Heart right ventricle (tissue), 16 donors: ENCODE measurements at regions of chr16 and their contacts with region 1.

Region 1: DNA sequence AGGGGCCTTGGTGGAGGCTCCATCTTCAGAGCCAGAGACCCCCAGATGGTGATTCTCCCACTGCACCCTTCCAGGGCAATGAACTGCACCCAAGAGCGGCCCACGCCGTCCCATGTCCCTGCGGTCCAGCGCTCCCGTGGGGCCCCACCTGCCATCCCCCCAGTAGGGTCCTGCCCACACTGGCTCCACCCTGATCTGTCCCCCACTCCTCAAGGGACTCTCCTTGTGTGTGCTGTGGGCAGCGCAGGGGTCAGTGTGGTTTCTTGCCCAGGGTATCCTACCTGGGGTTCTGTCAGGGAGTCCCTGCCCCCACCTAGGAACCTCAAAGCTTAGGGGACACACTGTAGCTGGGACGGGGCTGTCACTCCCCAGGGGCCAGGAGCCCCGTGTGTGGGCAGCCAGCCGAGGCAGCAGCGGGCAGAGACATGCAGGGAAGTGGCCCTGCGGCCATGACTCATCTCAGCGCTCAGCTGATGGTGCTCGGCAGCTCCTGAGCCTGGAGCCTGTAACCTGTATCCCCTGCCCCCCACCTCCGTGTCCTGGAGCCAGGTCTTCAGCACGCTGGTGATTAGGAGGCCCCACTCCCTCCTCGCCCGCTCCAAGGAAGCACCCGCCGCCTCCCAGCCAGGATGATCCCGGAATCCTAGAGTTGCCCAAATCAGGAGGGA is 35.7 kb upstream of the SSTR5 start:
- DNase-seq: no peak
- ATAC-seq: no peak
- H3K4me3 ChIP-seq: no peak overlapping the region
- H3K27ac ChIP-seq: no peak overlapping the region
- H3K4me1 ChIP-seq: no peaks in the 10 kb centered on the region
- H3K27me3 ChIP-seq: peaks cover 5 to 51% (median 47%) of the 10 kb centered on the region in 7 donors
- CTCF ChIP-seq: no peak

Region 2: GRCh38 chr16:1073566-1074378 is 36.9 kb after region 1 on chr16:
- intact Hi-C with region 1: loop called in 1 of 10 experiments (anchors 1 kb)
- DNase-seq: peak in 1 of 2 donors; percentile 68
- ATAC-seq: peak; percentile 47 to 73 (median 54)
- H3K4me3 ChIP-seq: peak overlapping the region in 5 of 10 donors; percentile 21 to 45 (median 35)
- H3K27ac ChIP-seq: peak overlapping the region in 6 of 10 donors; percentile 64 to 84 (median 68)
- H3K4me1 ChIP-seq: peaks cover 0 to 7% (median 0%) of the 10 kb centered on the region in 9 donors
- H3K27me3 ChIP-seq: peaks cover 19 to 87% (median 81%) of the 10 kb centered on the region in 7 donors
- CTCF ChIP-seq: peak in 8 of 9 donors; percentile 12 to 46 (median 38)

Region 3: GRCh38 chr16:1395444-1396031 is 358.7 kb after region 1 on chr16:
- intact Hi-C with region 1: loop called in 1 of 10 experiments (anchors 2 kb)
- DNase-seq: no peak
- ATAC-seq: no peak
- H3K4me3 ChIP-seq: no peak overlapping the region
- H3K27ac ChIP-seq: no peak overlapping the region
- H3K4me1 ChIP-seq: no peaks in the 10 kb centered on the region
- H3K27me3 ChIP-seq: no peaks in the 10 kb centered on the region
- CTCF ChIP-seq: no peak